Endothelial cell of umbilical vein (primary cell): ENCODE measurements at regions of chr5 and their contacts with region 1.

Region 1: GRCh38 chr5:157342822-157343402 is 77.0 kb downstream of the CYFIP2 start:
- DNase-seq: peak; percentile 28
- H3K4me3 ChIP-seq: no peak overlapping the region
- H3K27ac ChIP-seq: no peak overlapping the region
- H3K4me1 ChIP-seq: no peaks in the 10 kb centered on the region
- H3K27me3 ChIP-seq: peaks cover 0 to 3% of the 10 kb centered on the region in 2 experiments
- CTCF ChIP-seq: peak; percentile 65
- POLR2A ChIP-seq: no peak

Region 2: DNA sequence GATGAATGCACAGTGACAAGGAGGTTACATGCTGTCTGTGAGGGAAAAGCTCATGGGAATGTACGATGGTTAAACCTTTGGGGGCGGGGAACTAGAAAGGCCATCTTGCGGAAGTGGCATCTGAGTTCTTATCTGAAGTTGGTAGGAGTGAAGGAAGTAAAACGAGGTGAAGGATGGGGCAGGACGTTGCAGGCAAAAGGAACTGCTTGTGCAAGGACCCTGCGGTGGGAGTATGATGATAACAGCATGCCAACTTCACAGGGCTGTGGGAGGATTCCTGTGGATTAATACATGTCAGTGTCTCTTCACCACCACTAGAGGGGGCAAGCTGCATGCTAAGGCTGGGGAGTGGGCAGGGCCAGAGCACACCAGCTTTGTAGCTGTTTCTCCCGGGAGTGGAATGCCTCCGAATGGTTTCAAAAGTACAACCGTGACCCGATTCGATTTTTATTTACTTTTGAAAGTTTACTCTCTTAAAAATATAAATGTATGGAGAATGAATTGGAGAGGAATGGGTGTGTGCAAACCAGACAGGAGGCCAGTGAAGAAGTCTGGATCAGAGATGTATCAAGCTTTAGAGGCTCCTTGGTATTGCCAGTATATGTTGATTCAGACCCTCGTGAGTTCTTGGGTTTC is 14.5 kb before region 1 on chr5:
- CTCF ChIA-PET with region 1: interaction called, 48 read pairs
- POLR2A ChIA-PET with region 1: no interaction called
- dilution Hi-C with region 1: no loop called
- intact Hi-C with region 1: no loop called
- DNase-seq: peak; percentile 71
- H3K4me3 ChIP-seq: no peak overlapping the region
- H3K27ac ChIP-seq: no peak overlapping the region
- H3K4me1 ChIP-seq: no peaks in the 10 kb centered on the region
- H3K27me3 ChIP-seq: no peaks in the 10 kb centered on the region
- CTCF ChIP-seq: peak; percentile 91 to 93
- POLR2A ChIP-seq: no peak

Region 3: DNA sequence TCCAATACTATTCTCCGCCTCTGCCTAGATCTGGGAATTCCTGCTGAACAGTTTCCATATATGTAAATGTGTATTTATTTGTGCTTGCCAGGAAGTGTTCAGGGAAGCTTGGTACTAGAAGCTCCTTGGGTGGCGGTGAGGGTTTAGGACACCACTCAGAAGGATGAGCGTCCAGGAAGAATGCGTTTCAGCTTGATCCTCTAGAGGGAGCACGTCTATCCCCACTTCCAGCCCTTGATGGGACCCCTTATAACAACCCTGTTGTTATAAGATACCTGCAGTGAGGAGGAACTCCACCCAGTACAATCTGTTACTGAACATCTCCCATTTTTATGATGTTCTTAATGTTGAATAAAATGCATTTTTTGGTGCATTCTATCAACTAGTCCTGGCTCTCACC is 11.9 kb after region 1 on chr5:
- CTCF ChIA-PET with region 1: interaction called, 37 read pairs
- POLR2A ChIA-PET with region 1: no interaction called
- dilution Hi-C with region 1: no loop called
- intact Hi-C with region 1: no loop called
- DNase-seq: no peak
- H3K4me3 ChIP-seq: no peak overlapping the region
- H3K27ac ChIP-seq: no peak overlapping the region
- H3K4me1 ChIP-seq: peaks cover 13% of the 10 kb centered on the region
- H3K27me3 ChIP-seq: no peaks in the 10 kb centered on the region
- CTCF ChIP-seq: peak; percentile 17 to 31
- POLR2A ChIP-seq: no peak

Region 4: GRCh38 chr5:157384971-157385709 is 42.2 kb after region 1 on chr5:
- CTCF ChIA-PET with region 1: interaction called, 7 read pairs
- POLR2A ChIA-PET with region 1: no interaction called
- dilution Hi-C with region 1: no loop called
- intact Hi-C with region 1: loop called (anchors 2 kb)
- DNase-seq: peak; percentile 91
- H3K4me3 ChIP-seq: no peak overlapping the region
- H3K27ac ChIP-seq: peak overlapping the region; percentile 88
- H3K4me1 ChIP-seq: peaks cover 57% of the 10 kb centered on the region
- H3K27me3 ChIP-seq: no peaks in the 10 kb centered on the region
- CTCF ChIP-seq: no peak
- POLR2A ChIP-seq: no peak

Region 5: GRCh38 chr5:157476702-157477408 is 133.9 kb after region 1 on chr5:
- CTCF ChIA-PET with region 1: interaction called, 52 read pairs
- POLR2A ChIA-PET with region 1: no interaction called
- dilution Hi-C with region 1: loop called (anchors 25 kb)
- intact Hi-C with region 1: loop called (anchors 1 kb)
- DNase-seq: peak; percentile 67
- H3K4me3 ChIP-seq: no peak overlapping the region
- H3K27ac ChIP-seq: no peak overlapping the region
- H3K4me1 ChIP-seq: peaks cover 6% of the 10 kb centered on the region
- H3K27me3 ChIP-seq: peaks cover 0 to 2% of the 10 kb centered on the region in 2 experiments
- CTCF ChIP-seq: peak; percentile 73 to 77
- POLR2A ChIP-seq: no peak